ENCODE measurements at regions of chr20 and their contacts with region 1.

Region 1: GRCh38 chr20:5788385-5788895 is 38.2 kb downstream of the SHLD1 start:
- DNase-seq: peak; percentile 69 to 87 (median 73)
- ATAC-seq: peak; percentile 90
- H3K4me3 ChIP-seq: no peak overlapping the region
- H3K27ac ChIP-seq: no peak overlapping the region
- H3K4me1 ChIP-seq: peaks cover 16 to 24% of the 10 kb centered on the region in 2 experiments; a peak in 4 of 5 replicates
- H3K27me3 ChIP-seq: no peaks in the 10 kb centered on the region
- CTCF ChIP-seq: peak; percentile 73 to 97 (median 90)
- EP300 ChIP-seq: no peak
- POLR2A ChIP-seq: no peak
- RAD21 ChIP-seq: peak; percentile 93 to 95

Region 2: DNA sequence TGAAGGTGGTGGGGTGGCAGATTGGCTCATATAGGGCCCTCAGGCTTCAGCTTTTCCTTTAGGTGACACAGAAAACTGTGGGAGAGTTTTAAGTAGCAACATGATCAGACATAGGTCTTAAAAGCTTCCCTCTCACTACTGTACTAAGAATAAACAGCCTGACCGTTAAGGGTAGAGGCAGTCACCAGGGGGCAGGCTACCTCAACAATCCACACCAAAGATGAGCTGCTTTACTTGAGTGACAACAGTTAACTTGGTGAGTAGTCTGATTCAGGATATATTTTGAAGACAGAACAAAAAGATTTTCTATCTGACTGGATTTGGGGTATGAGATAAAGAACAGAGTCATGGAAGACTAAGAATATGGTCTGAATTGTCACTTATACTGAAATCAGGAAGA is 231.3 kb before region 1 on chr20:
- CTCF ChIA-PET with region 1: interaction called, 12 read pairs
- POLR2A ChIA-PET with region 1: no interaction called
- in situ Hi-C with region 1: loop called (anchors 25 kb)
- intact Hi-C with region 1: loop called (anchors 1 kb)
- DNase-seq: peak; percentile 36 to 63 (median 44)
- ATAC-seq: peak; percentile 94
- H3K4me3 ChIP-seq: no peak overlapping the region
- H3K27ac ChIP-seq: no peak overlapping the region
- H3K4me1 ChIP-seq: no peaks in the 10 kb centered on the region
- H3K27me3 ChIP-seq: no peaks in the 10 kb centered on the region
- CTCF ChIP-seq: peak; percentile 51 to 59 (median 55)
- EP300 ChIP-seq: no peak
- POLR2A ChIP-seq: no peak
- RAD21 ChIP-seq: peak; percentile 58 to 69

Region 3: GRCh38 chr20:5608442-5609161 is 179.8 kb before region 1 on chr20:
- CTCF ChIA-PET with region 1: no interaction called
- POLR2A ChIA-PET with region 1: interaction called, 6 read pairs
- in situ Hi-C with region 1: no loop called
- intact Hi-C with region 1: loop called (anchors 5 kb)
- DNase-seq: peak in 1 of 4 experiments; percentile 37
- ATAC-seq: peak; percentile 29
- H3K4me3 ChIP-seq: peak overlapping the region; percentile 55
- H3K27ac ChIP-seq: peak overlapping the region; percentile 95
- H3K4me1 ChIP-seq: peaks cover 2 to 3% of the 10 kb centered on the region in 2 experiments; a peak in 4 of 5 replicates
- H3K27me3 ChIP-seq: no peaks in the 10 kb centered on the region
- CTCF ChIP-seq: no peak
- EP300 ChIP-seq: no peak
- POLR2A ChIP-seq: no peak
- RAD21 ChIP-seq: no peak

Region 4: DNA sequence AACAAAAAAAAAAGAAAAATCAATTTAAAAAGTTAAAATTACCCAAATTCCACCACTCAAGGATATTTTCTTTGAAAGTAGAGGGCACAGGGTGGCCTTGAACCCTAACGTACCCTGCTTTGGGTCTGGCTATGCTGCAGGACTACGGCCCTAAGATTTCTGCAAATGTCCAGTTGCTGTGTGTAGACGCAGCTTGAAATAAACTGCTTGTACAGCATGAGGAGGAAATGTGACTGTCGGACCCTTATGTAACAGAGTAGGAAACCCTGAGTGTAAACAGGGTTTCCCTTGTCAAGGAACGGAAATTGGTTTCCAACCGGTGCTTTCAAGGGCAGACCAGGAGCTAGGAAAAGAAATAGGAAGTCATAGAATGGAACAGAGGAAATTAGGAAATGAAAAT is 99.0 kb before region 1 on chr20:
- CTCF ChIA-PET with region 1: no interaction called
- POLR2A ChIA-PET with region 1: no interaction called
- in situ Hi-C with region 1: no loop called
- intact Hi-C with region 1: no loop called
- DNase-seq: no peak
- ATAC-seq: no peak
- H3K4me3 ChIP-seq: no peak overlapping the region
- H3K27ac ChIP-seq: no peak overlapping the region
- H3K4me1 ChIP-seq: peaks cover 6 to 7% of the 10 kb centered on the region in 2 experiments; a peak in 3 of 5 replicates
- H3K27me3 ChIP-seq: no peaks in the 10 kb centered on the region
- CTCF ChIP-seq: no peak
- EP300 ChIP-seq: no peak
- POLR2A ChIP-seq: no peak
- RAD21 ChIP-seq: no peak

Region 5: DNA sequence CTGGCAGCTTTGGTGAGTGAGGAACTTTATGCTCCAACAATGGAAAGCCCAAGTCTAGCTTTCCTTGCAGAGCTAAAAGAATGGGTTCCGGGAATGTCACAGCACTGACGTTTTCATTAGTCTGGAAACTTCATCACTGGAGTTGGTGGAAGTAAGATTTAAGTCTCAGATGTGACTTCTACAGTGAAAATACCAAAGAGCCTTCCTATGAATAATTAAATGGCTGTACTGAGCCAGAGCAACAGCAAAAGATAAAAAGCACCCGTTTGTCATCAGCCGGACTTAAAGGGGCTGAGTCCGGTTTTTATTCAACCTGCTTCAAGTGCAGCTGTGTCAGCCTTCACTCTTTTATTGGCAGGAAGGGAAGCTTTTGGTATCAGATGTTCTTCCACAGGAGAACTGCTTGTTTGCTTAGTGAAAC is 84.7 kb before region 1 on chr20:
- CTCF ChIA-PET with region 1: no interaction called
- POLR2A ChIA-PET with region 1: no interaction called
- in situ Hi-C with region 1: no loop called
- intact Hi-C with region 1: loop called (anchors 10 kb)
- DNase-seq: no peak
- ATAC-seq: 0 out of 3 replicates have a peak, but pooled peaks have one; percentile 30
- H3K4me3 ChIP-seq: no peak overlapping the region
- H3K27ac ChIP-seq: no peak overlapping the region
- H3K4me1 ChIP-seq: peaks cover 2 to 15% of the 10 kb centered on the region in 2 experiments; a peak in 2 of 5 replicates
- H3K27me3 ChIP-seq: no peaks in the 10 kb centered on the region
- CTCF ChIP-seq: no peak
- EP300 ChIP-seq: no peak
- POLR2A ChIP-seq: no peak
- RAD21 ChIP-seq: no peak

Region 6: GRCh38 chr20:5766085-5766764 is 22.2 kb before region 1 on chr20:
- CTCF ChIA-PET with region 1: no interaction called
- POLR2A ChIA-PET with region 1: no interaction called
- in situ Hi-C with region 1: no loop called
- intact Hi-C with region 1: loop called (anchors 2 kb)
- DNase-seq: no peak
- ATAC-seq: no peak
- H3K4me3 ChIP-seq: no peak overlapping the region
- H3K27ac ChIP-seq: no peak overlapping the region
- H3K4me1 ChIP-seq: peaks cover 10 to 24% of the 10 kb centered on the region in 2 experiments; a peak in 4 of 5 replicates
- H3K27me3 ChIP-seq: no peaks in the 10 kb centered on the region
- CTCF ChIP-seq: no peak
- EP300 ChIP-seq: no peak
- POLR2A ChIP-seq: no peak
- RAD21 ChIP-seq: no peak

Measured in K562 (cell line).